Posterior cingulate gyrus (tissue), 11 donors: ENCODE measurements at regions of chr4 and their contacts with region 1.

Region 1: GRCh38 chr4:1856042-1856788 is at the start of gene LETM1:
- DNase-seq: peak; percentile 93 to 99 (median 96)

Region 2: DNA sequence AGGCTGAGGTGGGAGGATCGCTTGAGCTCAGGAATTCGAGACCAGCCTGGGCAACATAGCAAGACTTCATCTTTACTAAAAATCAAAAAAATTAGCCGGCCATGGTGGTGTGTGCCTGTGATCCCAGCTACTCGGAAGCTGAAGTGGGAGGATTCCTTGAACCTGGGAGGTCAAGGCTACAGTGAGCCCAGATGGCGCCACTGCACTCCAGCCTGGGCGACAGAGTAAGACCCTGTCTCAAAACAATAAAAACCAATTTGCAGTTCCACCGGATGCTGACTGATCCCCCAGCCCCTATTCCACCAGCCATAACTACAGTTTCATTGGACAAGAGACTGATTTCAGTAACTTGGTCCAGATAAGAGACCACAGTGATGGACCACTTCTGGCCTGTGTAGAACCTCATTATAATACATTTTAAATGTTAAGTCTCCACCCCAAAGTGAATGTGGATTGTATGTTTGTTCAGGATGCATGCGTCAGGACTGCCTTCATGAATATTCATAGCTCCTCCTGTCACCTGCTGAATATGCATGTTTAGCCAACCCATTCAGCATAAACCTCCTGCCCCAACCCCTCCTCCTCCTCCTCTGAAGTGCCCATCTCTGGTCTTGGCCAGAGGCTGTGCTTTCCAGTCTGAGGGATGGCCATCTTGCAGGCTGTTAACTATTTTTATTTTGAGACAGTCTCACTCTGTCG is 141.8 kb before region 1 on chr4:
- intact Hi-C with region 1: loop called (anchors 5 kb)
- DNase-seq: peak in 1 of 10 donors; percentile 62

Region 3: GRCh38 chr4:1870578-1871443 is 14.6 kb after region 1 on chr4 and contains the start of gene NSD2:
- intact Hi-C with region 1: loop called (anchors 1 kb)
- DNase-seq: peak; percentile 72 to 98 (median 83)

Region 4: DNA sequence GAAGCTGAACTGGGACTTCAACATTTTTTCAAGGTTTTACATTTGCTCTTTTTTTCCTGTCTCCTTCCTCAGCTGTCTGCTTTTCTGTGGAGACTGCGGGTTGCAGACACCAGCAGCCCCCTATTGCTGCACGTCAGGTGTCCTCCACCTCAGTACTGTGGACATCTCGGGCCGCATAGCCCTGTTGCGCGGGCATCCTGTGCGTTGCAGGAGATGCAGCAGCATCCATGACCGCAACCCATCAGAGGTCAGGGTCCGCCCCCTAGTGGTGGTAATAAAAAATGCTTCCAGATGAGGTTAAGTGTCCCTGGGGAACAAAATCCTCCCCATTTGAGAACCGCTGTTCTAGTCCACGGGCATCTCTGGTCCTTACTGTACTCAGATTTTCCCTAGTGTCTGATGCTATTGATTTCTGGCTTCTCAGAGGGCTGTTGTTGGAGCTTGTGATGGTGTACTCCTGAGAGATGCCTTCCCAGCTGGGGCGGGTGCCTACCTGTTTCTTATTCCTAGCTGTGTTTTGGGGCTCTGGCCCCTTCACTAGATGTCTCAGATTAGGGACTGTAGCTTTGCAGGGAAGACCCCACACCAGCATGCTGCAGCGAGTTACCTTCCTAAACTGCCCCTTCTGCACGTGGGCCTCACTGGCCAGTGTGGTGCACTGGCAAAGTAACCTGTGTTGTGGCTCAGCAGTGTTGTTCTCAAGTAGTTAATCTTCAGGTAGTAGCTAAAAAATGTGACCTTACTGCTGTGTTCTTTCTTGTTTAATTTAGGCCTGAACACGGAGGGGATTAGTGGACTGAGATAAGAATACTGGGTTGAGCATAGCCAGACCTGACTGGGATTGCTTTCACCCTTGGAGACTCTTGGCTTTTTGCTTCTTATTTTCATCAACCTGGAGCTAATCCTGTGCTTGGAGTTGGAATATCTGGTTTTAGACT is 43.2 kb after region 1 on chr4:
- intact Hi-C with region 1: loop called (anchors 2 kb)
- DNase-seq: peak; percentile 42 to 95 (median 64)